Naive thymus-derived CD4-positive, alpha-beta T cell (primary cell): ENCODE measurements at regions of chr17 and their contacts with region 1.

Region 1: GRCh38 chr17:45317112-45317928 is 500 bp upstream of the MAP3K14 start:
- DNase-seq: peak; percentile 97 to 100 (median 100)
- ATAC-seq: peak; percentile 92
- H3K4me3 ChIP-seq: peak overlapping the region; percentile 80
- H3K4me3 Mint-ChIP-seq: peak overlapping the region; percentile 81 to 97 (median 92)
- H3K27ac ChIP-seq: peak overlapping the region; percentile 93
- H3K27ac Mint-ChIP-seq: peak overlapping the region; percentile 90 to 98 (median 95)
- H3K4me1 ChIP-seq: peaks cover 47 to 57% of the 10 kb centered on the region in 2 donors
- H3K4me1 Mint-ChIP-seq: peaks cover 60 to 88% (median 82%) of the 10 kb centered on the region in 7 donors
- H3K27me3 ChIP-seq: no peaks in the 10 kb centered on the region
- H3K27me3 Mint-ChIP-seq: peaks cover 0 to 4% (median 0%) of the 10 kb centered on the region in 5 donors

Region 2: GRCh38 chr17:45135192-45135977 is 181.9 kb before region 1 on chr17 and contains the start of gene ACBD4:
- CTCF ChIA-PET with region 1: interaction called, 3 read pairs
- POLR2A ChIA-PET with region 1: no interaction called
- intact Hi-C with region 1: loop called in 1 of 2 experiments (anchors 2 kb)
- DNase-seq: peak; percentile 95 to 100 (median 98)
- ATAC-seq: peak; percentile 93
- H3K4me3 ChIP-seq: peak within 1 kb of the TSS; percentile 94
- H3K4me3 Mint-ChIP-seq: peak within 1 kb of the TSS; percentile 87 to 95 (median 90)
- H3K27ac ChIP-seq: peak within 1 kb of the TSS; percentile 76
- H3K27ac Mint-ChIP-seq: peak within 1 kb of the TSS; percentile 75 to 92 (median 82)
- H3K4me1 ChIP-seq: peaks cover 12% of the 10 kb centered on the region in 2 donors
- H3K4me1 Mint-ChIP-seq: peaks cover 9 to 25% (median 21%) of the 10 kb centered on the region in 7 donors
- H3K27me3 ChIP-seq: no peaks in the 10 kb centered on the region
- H3K27me3 Mint-ChIP-seq: peaks cover 0 to 8% (median 0%) of the 10 kb centered on the region in 5 donors
- total RNA-seq, gene ACBD4: 17.9 to 59.5 (median 31.3) TPM

Region 3: GRCh38 chr17:45228763-45229539 is 88.4 kb before region 1 on chr17:
- CTCF ChIA-PET with region 1: interaction called, 9 read pairs
- POLR2A ChIA-PET with region 1: interaction called, 37 read pairs
- intact Hi-C with region 1: loop called (anchors 1 kb)
- DNase-seq: peak; percentile 64 to 92 (median 74)
- ATAC-seq: peak; percentile 66
- H3K4me3 ChIP-seq: peak overlapping the region; percentile 91
- H3K4me3 Mint-ChIP-seq: peak overlapping the region; percentile 83 to 99 (median 96)
- H3K27ac ChIP-seq: peak overlapping the region; percentile 96
- H3K27ac Mint-ChIP-seq: peak overlapping the region; percentile 96 to 100 (median 99)
- H3K4me1 ChIP-seq: peaks cover 62 to 77% of the 10 kb centered on the region in 2 donors
- H3K4me1 Mint-ChIP-seq: peaks cover 54 to 91% (median 77%) of the 10 kb centered on the region in 7 donors
- H3K27me3 ChIP-seq: no peaks in the 10 kb centered on the region
- H3K27me3 Mint-ChIP-seq: no peaks in the 10 kb centered on the region

Region 4: GRCh38 chr17:45277216-45277849 is 40.0 kb before region 1 on chr17:
- CTCF ChIA-PET with region 1: interaction called, 74 read pairs
- POLR2A ChIA-PET with region 1: interaction called, 14 read pairs
- intact Hi-C with region 1: loop called (anchors 1 kb)
- DNase-seq: peak; percentile 77 to 89 (median 86)
- ATAC-seq: peak; percentile 98
- H3K4me3 ChIP-seq: no peak overlapping the region
- H3K4me3 Mint-ChIP-seq: peak overlapping the region in 2 of 10 donors; percentile 26 to 28
- H3K27ac ChIP-seq: no peak overlapping the region
- H3K27ac Mint-ChIP-seq: peak overlapping the region; percentile 1 to 77 (median 40)
- H3K4me1 ChIP-seq: peaks cover 0 to 5% of the 10 kb centered on the region in 2 donors
- H3K4me1 Mint-ChIP-seq: peaks cover 3 to 22% (median 10%) of the 10 kb centered on the region in 7 donors
- H3K27me3 ChIP-seq: no peaks in the 10 kb centered on the region
- H3K27me3 Mint-ChIP-seq: no peaks in the 10 kb centered on the region

Region 5: DNA sequence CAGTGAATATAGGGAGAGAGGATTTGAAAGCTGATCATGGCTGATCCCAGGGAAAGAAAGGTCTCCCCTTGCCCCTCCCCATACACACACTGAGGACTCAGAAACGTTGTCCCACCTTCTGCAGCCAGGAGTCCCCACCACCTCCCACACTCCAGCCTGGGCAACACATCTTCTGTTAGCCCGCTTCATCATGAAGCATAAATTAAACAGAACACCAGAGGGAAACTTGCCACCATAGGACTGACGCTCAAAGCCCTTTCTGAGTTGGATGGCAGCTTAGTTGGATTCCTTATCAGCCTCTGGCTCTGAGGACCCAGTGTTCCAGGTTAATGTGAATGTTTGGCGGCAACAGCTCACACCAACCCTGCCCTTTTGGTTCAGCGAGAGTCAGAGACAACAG is 81.5 kb after region 1 on chr17:
- CTCF ChIA-PET with region 1: no interaction called
- POLR2A ChIA-PET with region 1: no interaction called
- intact Hi-C with region 1: no loop called
- DNase-seq: no peak
- ATAC-seq: no peak
- H3K4me3 ChIP-seq: no peak overlapping the region
- H3K4me3 Mint-ChIP-seq: no peak overlapping the region
- H3K27ac ChIP-seq: no peak overlapping the region
- H3K27ac Mint-ChIP-seq: peak overlapping the region in 6 of 9 donors; percentile 28 to 72 (median 46)
- H3K4me1 ChIP-seq: no peaks in the 10 kb centered on the region
- H3K4me1 Mint-ChIP-seq: peaks cover 0 to 13% (median 4%) of the 10 kb centered on the region in 7 donors
- H3K27me3 ChIP-seq: no peaks in the 10 kb centered on the region
- H3K27me3 Mint-ChIP-seq: no peaks in the 10 kb centered on the region

Region 6: GRCh38 chr17:45584092-45585036 is 267.0 kb after region 1 on chr17:
- CTCF ChIA-PET with region 1: no interaction called
- POLR2A ChIA-PET with region 1: no interaction called
- intact Hi-C with region 1: loop called (anchors 1 to 2 kb)
- DNase-seq: peak; percentile 59 to 84 (median 64)
- ATAC-seq: peak; percentile 59
- H3K4me3 ChIP-seq: peak overlapping the region; percentile 81
- H3K4me3 Mint-ChIP-seq: peak overlapping the region; percentile 85 to 99 (median 97)
- H3K27ac ChIP-seq: peak overlapping the region; percentile 85
- H3K27ac Mint-ChIP-seq: peak overlapping the region; percentile 90 to 99 (median 96)
- H3K4me1 ChIP-seq: peaks cover 8 to 11% of the 10 kb centered on the region in 2 donors
- H3K4me1 Mint-ChIP-seq: peaks cover 20 to 52% (median 47%) of the 10 kb centered on the region in 7 donors
- H3K27me3 ChIP-seq: no peaks in the 10 kb centered on the region
- H3K27me3 Mint-ChIP-seq: peaks cover 0 to 2% (median 0%) of the 10 kb centered on the region in 5 donors

Region 7: GRCh38 chr17:45666046-45666600 is 348.8 kb after region 1 on chr17:
- CTCF ChIA-PET with region 1: no interaction called
- POLR2A ChIA-PET with region 1: no interaction called
- intact Hi-C with region 1: no loop called
- DNase-seq: no peak
- ATAC-seq: no peak
- H3K4me3 ChIP-seq: no peak overlapping the region
- H3K4me3 Mint-ChIP-seq: no peak overlapping the region
- H3K27ac ChIP-seq: no peak overlapping the region
- H3K27ac Mint-ChIP-seq: no peak overlapping the region
- H3K4me1 ChIP-seq: no peaks in the 10 kb centered on the region
- H3K4me1 Mint-ChIP-seq: no peaks in the 10 kb centered on the region
- H3K27me3 ChIP-seq: no peaks in the 10 kb centered on the region
- H3K27me3 Mint-ChIP-seq: peaks cover 8 to 23% (median 20%) of the 10 kb centered on the region in 5 donors